ENCODE measurements at regions of chr1 and their contacts with region 1.

Region 1: GRCh38 chr1:1748686-1749321 is 24.6 kb upstream of the CDK11A start:
- DNase-seq: no peak
- ATAC-seq: no peak
- H3K4me3 Mint-ChIP-seq: no peak overlapping the region
- H3K27ac Mint-ChIP-seq: peak overlapping the region; percentile 8
- H3K4me1 Mint-ChIP-seq: peaks cover 3% of the 10 kb centered on the region
- H3K27me3 Mint-ChIP-seq: no peaks in the 10 kb centered on the region

Region 2: GRCh38 chr1:1703796-1704195 is 45.0 kb before region 1 on chr1:
- CTCF ChIA-PET with region 1: no interaction called
- POLR2A ChIA-PET with region 1: no interaction called
- intact Hi-C with region 1: loop called in 1 of 2 experiments (anchors 10 kb)
- DNase-seq: no peak
- ATAC-seq: no peak
- H3K4me3 Mint-ChIP-seq: no peak overlapping the region
- H3K27ac Mint-ChIP-seq: no peak overlapping the region
- H3K4me1 Mint-ChIP-seq: no peaks in the 10 kb centered on the region
- H3K27me3 Mint-ChIP-seq: peaks cover 2% of the 10 kb centered on the region